Heart left ventricle (tissue), 16 donors: ENCODE measurements at regions of chr3 and their contacts with region 1.

Region 1: DNA sequence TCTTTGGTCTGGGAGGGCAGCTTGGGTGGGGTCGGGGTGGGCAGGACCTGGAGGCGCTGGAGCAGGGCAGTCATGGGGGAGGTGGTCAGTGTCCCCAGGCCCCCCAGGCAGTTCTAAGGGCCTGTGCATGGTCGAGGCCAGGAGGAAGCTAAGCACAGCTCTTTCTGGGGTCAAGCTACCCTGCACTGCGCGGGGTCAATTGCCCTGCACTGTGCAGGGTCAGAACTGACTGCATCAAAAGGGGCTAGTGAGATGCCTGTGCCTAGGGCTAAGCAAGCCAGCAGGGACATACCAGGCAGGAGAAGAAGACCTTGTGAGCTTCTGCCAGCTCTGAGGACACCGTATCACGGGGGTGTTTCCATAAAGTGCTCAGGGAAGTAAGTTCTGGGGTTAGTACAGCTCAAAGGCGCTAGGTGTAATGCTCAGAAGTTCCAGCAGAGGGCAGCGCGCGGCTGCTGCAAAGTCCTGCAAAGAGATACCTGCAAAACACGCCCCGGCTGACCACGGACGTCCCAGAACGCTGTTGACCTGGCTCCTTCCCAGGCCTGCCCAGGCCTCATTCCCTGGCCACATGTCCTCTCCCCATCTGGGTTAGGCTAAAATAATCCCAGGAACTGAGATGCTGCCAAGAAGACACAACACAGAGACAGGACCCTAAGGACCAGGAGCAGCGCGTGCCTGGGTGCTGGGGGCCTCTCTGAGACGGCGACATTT is 18.8 kb upstream of the IQSEC1 start:
- DNase-seq: peak; percentile 84 to 90 (median 87)
- ATAC-seq: peak; percentile 79 to 83 (median 81)
- H3K4me3 ChIP-seq: peak overlapping the region in 6 of 12 donors; percentile 22 to 34 (median 24)
- H3K27ac ChIP-seq: peak overlapping the region in 8 of 12 donors; percentile 28 to 78 (median 60)
- H3K4me1 ChIP-seq: peaks cover 0 to 24% (median 10%) of the 10 kb centered on the region in 12 donors
- H3K27me3 ChIP-seq: no peaks in the 10 kb centered on the region
- CTCF ChIP-seq: peak; percentile 93 to 99 (median 97)
- POLR2A ChIP-seq: no peak

Region 2: DNA sequence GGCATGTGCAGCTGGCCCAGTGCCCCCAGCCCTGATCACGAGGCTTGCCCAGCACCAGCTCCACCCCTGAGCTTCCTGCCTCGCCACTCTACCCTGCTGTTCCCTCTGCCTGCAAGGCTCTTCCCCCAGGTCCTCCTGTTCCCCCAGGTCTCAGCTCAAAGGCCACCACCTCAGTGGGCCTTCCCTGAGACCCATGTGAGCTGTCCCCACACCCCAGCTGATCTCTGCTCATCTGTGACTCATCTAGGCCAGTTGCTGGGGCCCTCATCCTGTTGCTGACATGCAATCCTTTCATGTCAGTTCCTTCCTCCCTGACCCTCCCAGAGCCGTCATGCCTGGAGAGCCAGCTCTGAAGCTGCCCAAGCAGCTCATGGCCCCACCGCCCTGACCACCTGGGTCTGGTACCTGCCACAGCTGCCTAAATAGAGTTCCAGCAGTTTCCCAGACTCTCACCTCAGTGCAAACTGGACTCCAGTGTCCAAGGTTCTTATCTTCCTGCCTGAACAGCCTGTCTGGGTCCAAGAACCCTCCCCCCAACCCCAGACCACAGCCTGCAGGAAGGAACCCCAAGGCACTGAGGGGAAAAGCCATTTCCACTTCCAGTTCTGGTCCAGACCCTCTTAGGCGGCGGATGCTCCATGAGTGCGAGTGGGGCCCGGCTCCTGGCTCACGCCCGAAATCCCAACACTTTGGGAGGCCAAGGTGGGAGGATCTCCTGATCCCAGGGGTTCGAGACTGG is 97.8 kb after region 1 on chr3:
- intact Hi-C with region 1: loop called in 1 of 10 experiments (anchors 10 kb)
- DNase-seq: peak in 1 of 5 donors; percentile 49
- ATAC-seq: peak in 3 of 4 donors; percentile 46 to 62 (median 51)
- H3K4me3 ChIP-seq: no peak overlapping the region
- H3K27ac ChIP-seq: no peak overlapping the region
- H3K4me1 ChIP-seq: peaks cover 0 to 18% (median 5%) of the 10 kb centered on the region in 12 donors
- H3K27me3 ChIP-seq: peaks cover 0 to 14% (median 0%) of the 10 kb centered on the region in 9 donors
- CTCF ChIP-seq: no peak
- POLR2A ChIP-seq: no peak

Region 3: GRCh38 chr3:13282986-13283876 is 191.2 kb after region 1 on chr3:
- intact Hi-C with region 1: loop called in 7 of 10 experiments (anchors 5 to 10 kb)
- DNase-seq: peak in 1 of 5 donors; percentile 41
- ATAC-seq: peak in 2 of 4 donors; percentile 27 to 50
- H3K4me3 ChIP-seq: peak overlapping the region in 11 of 12 donors; percentile 50 to 80 (median 66)
- H3K27ac ChIP-seq: peak overlapping the region in 6 of 12 donors; percentile 25 to 90 (median 82)
- H3K4me1 ChIP-seq: peaks cover 0 to 23% (median 9%) of the 10 kb centered on the region in 12 donors
- H3K27me3 ChIP-seq: peaks cover 6 to 50% (median 31%) of the 10 kb centered on the region in 9 donors
- CTCF ChIP-seq: peak in 11 of 12 donors; percentile 15 to 55 (median 35)
- POLR2A ChIP-seq: no peak

Region 4: DNA sequence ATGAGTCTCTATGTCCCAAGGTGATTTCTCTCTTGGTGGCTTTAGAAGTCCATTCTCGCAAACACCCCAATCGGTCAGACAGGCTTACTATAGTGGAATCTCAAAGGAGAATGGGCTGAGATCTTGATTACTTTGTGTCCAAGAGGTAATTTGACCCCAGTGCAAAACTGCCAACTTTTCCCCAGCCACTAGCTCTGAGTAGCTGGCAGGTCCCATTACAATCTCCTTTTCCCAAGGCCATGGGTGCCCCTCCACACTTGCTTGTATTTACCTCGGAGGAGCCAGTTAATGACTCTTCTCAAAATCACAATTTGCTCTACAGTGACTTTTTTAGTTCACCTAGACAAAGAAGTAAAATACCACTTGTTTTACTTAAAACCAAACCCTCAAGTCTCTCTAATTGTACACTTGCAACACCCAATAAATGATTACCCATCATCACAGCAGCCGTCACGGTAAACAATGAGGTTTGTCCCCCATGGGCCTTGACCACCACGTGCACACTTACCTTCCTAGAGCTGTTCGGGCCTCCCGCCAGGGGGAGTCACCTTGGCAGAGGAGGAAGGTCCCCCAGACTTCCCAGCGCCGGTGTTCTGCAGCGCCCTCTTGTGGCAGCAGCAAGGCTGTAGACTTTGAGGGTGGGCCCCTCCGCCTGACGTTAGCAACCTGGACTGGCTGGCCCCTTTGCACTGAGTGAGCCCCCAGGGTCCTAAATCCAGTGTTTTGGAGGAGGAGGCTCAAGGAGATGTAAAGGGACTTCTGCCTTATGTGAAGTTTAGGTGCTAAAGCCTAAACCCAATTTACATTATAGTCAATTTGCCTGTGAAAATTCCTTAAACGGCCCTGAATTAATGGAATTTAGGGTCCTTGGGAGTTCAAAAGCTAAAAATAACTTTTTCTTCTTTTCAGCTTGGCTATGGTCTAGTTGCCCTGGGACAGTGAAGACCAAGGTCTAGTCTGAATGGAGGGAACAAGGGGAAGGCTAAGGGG is 369.4 kb after region 1 on chr3:
- intact Hi-C with region 1: loop called in 1 of 10 experiments (anchors 5 kb)
- DNase-seq: peak; percentile 23 to 79 (median 47)
- ATAC-seq: peak in 1 of 4 donors; percentile 49
- H3K4me3 ChIP-seq: no peak overlapping the region
- H3K27ac ChIP-seq: no peak overlapping the region
- H3K4me1 ChIP-seq: peaks cover 0 to 17% (median 0%) of the 10 kb centered on the region in 12 donors
- H3K27me3 ChIP-seq: peaks cover 0 to 5% (median 0%) of the 10 kb centered on the region in 9 donors
- CTCF ChIP-seq: peak in 11 of 12 donors; percentile 19 to 59 (median 46)
- POLR2A ChIP-seq: no peak

Region 5: DNA sequence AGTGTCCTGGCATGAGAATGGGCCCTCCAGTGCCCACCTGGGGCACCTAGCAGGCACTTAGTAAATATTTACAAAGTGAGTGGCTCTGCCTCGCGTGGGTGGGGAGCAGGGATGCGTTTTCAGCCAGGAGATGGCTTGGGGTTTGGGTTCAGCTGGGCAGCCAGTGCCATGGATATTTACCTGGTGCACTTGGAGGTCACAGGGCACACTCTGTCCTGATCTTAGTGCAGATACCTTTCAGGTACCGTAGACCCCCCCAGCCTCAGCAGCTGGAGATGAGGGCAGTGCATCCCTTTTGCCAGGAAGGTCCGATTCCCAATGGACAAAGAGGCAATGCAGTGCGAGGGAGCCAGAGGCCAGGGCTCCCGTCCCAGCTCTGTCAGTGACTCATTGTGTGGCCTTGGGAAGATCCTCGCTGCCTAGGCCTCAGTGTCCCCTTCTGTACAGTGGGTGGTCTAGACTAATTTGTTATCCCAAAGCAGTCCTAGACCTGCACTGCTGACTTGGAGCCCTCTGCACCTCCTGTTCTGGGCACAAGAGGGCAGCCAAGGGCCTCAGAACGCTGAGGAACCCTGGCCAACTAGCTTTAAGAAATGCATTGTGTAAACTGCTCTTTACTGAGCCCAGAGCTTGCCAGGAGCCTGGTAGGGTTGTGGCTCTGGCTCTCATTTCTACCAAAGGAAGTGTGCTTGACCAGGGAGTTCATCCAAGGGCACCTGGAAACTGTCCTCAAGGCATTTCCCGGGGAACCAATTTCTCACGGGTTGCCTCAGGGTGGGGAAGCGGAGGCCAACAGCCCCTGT is 404.1 kb after region 1 on chr3:
- intact Hi-C with region 1: loop called in 1 of 10 experiments (anchors 5 kb)
- DNase-seq: peak; percentile 70 to 80 (median 73)
- ATAC-seq: peak; percentile 72 to 95 (median 90)
- H3K4me3 ChIP-seq: no peak overlapping the region
- H3K27ac ChIP-seq: peak overlapping the region in 1 of 12 donors; percentile 3
- H3K4me1 ChIP-seq: peaks cover 0 to 14% (median 9%) of the 10 kb centered on the region in 12 donors
- H3K27me3 ChIP-seq: no peaks in the 10 kb centered on the region
- CTCF ChIP-seq: peak; percentile 83 to 98 (median 94)
- POLR2A ChIP-seq: no peak